Activated CD8-positive, alpha-beta T cell treated with anti-CD3 and anti-CD28 coated beads, Interleukin-2, amount 10 ng/mL, durations not matched to agents 7 days and 5 days (primary cell): ENCODE measurements at regions of chr10 and their contacts with region 1.

Region 1: GRCh38 chr10:70461215-70461986 is 17.2 kb upstream of the PALD1 start:
- DNase-seq: peak; percentile 67
- ATAC-seq: peak; percentile 66
- H3K4me3 Mint-ChIP-seq: no peak overlapping the region
- H3K27ac Mint-ChIP-seq: no peak overlapping the region
- H3K4me1 Mint-ChIP-seq: no peaks in the 10 kb centered on the region
- H3K27me3 Mint-ChIP-seq: peaks cover 40% of the 10 kb centered on the region

Region 2: GRCh38 chr10:70478191-70479164 is 17.1 kb after region 1 on chr10 and contains the start of gene PALD1:
- CTCF ChIA-PET with region 1: interaction called, 19 read pairs
- POLR2A ChIA-PET with region 1: no interaction called
- DNase-seq: peak; percentile 54
- ATAC-seq: peak; percentile 52
- H3K4me3 Mint-ChIP-seq: peak within 1 kb of the TSS; percentile 77
- H3K27ac Mint-ChIP-seq: peak within 1 kb of the TSS; percentile 75
- H3K4me1 Mint-ChIP-seq: peaks cover 61% of the 10 kb centered on the region
- H3K27me3 Mint-ChIP-seq: peaks cover 32% of the 10 kb centered on the region
- total RNA-seq, gene PALD1: 6.2 to 6.5 TPM

Region 3: DNA sequence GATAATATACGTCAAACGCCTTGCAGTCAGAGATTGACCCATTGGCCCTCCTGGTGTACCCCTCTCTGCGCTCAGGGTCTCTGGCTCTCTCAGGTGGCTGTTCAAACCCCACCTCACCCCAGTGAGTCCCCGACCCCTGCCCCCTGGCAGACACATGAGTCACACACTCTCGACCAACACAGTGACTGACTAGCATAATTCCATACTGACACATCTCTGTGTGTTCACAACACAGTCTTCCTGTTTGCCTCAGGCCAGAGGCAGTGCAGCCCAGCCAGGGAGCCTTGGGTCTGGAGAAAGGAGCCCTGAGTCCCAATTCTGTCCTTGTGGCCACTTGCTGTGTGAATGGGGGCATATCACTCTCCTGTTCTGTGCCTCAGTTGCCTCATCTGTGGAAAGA is 57.3 kb after region 1 on chr10:
- CTCF ChIA-PET with region 1: interaction called, 12 read pairs
- POLR2A ChIA-PET with region 1: no interaction called
- DNase-seq: no peak
- ATAC-seq: no peak
- H3K4me3 Mint-ChIP-seq: no peak overlapping the region
- H3K27ac Mint-ChIP-seq: no peak overlapping the region
- H3K4me1 Mint-ChIP-seq: peaks cover 4% of the 10 kb centered on the region
- H3K27me3 Mint-ChIP-seq: peaks cover 2% of the 10 kb centered on the region

Region 4: GRCh38 chr10:70540089-70540788 is 78.8 kb after region 1 on chr10:
- CTCF ChIA-PET with region 1: interaction called, 36 read pairs
- POLR2A ChIA-PET with region 1: no interaction called
- DNase-seq: no peak
- ATAC-seq: peak; percentile 52
- H3K4me3 Mint-ChIP-seq: no peak overlapping the region
- H3K27ac Mint-ChIP-seq: no peak overlapping the region
- H3K4me1 Mint-ChIP-seq: no peaks in the 10 kb centered on the region
- H3K27me3 Mint-ChIP-seq: peaks cover 5% of the 10 kb centered on the region

Region 5: GRCh38 chr10:70758757-70759514 is 297.5 kb after region 1 on chr10:
- CTCF ChIA-PET with region 1: interaction called, 10 read pairs
- POLR2A ChIA-PET with region 1: no interaction called
- DNase-seq: peak; percentile 82
- ATAC-seq: peak; percentile 70
- H3K4me3 Mint-ChIP-seq: no peak overlapping the region
- H3K27ac Mint-ChIP-seq: peak overlapping the region; percentile 2
- H3K4me1 Mint-ChIP-seq: peaks cover 17% of the 10 kb centered on the region
- H3K27me3 Mint-ChIP-seq: peaks cover 3% of the 10 kb centered on the region